ENCODE measurements at regions of chr10 and their contacts with region 1.

Region 1: DNA sequence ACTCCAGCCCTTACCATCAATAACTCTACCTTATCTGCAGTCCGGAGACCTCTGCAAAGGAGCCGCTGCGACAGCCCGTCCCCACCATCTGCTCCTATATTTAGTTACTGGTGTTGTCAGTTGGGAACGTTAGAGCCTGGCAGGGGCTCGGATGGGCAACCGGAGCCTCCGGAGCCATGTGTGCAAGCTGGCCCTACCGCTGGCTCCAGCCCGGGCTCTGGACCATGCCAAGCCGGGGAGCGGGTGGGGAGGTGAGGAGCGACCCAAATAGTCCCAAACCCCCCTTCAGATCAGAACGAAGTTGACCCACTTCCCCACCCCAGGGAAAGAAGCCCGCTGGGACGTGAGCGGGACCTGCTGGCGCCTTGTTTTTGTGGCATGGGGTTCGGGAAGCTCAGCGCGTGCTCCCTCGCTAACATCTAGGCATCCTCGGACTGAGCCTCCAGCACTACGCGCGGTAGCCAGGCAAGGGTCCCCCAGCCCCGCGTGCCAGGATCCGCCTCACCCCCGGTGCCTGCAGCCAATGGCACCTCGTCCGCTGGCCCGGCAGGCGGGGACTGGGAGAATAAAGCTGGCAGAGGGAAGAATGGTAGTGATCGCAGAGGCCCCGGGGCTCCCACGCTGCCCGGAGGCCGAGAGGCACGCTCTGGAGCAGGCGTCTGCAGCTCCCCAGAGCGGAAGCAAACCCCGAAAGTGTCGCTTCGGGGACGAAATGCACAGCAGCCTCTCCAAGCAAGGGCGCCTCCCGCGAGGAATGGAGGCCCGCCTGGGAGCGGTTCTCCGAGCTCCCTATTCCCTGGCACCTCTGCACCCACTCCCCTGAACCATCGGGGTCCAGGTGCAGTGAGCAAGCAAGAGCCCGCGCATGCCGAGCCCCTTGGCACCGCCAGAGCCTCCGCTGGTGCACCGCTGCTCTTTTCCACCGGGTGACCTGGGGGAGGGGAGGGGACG is 679 bp downstream of the LRRC20 start:
- DNase-seq: peak; percentile 57
- ATAC-seq: peak; percentile 21
- H3K4me3 ChIP-seq: peak overlapping the region; percentile 76
- H3K27ac ChIP-seq: no peak overlapping the region
- H3K4me1 ChIP-seq: peaks cover 28% of the 10 kb centered on the region
- H3K27me3 ChIP-seq: no peaks in the 10 kb centered on the region
- CTCF ChIP-seq: no peak

Region 2: DNA sequence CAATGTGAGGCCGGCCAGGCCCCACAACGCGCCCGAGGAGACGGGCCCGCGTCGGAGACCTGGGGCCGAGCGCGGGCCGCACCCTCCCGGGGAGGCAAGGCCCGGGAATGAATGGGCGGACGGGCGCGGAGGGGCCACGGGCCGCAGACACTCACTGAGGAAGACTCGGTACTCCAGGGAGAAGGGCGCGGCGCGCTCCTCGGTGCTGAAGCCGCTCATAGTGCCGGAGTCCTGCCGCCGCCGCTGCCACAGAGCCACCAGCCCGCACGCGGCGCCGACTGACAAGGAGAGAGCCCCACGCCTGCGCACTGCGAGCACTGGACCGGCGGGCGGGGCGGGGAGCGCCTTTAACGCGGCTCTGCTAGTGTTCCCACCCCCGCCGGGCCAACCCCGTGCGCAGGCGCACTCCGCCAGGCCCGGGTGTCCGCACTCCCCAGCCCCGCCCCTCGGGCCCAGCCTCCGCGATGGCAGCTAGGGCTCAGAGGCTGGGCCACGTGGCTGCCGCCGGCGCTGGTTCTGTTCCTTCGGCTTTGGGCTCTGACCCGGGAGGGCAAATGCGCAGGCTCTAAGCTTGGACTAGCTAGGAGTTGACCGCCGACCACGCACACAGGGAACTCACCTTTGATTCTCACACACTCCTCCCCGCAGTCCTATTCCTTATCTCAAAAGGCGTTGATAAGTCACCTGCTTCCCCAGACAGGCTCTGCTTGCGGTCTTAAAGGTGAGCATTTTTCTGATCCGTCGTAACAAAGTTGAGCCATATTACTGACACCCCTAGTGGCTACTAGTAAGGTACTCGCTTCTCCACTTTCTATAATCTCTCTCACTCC is 148.4 kb before region 1 on chr10 and contains the start of gene PPA1:
- CTCF ChIA-PET with region 1: no interaction called
- POLR2A ChIA-PET with region 1: no interaction called
- intact Hi-C with region 1: loop called (anchors 1 kb)
- DNase-seq: peak; percentile 100
- ATAC-seq: peak; percentile 87
- H3K4me3 ChIP-seq: peak within 1 kb of the TSS; percentile 91
- H3K27ac ChIP-seq: peak within 1 kb of the TSS; percentile 75
- H3K4me1 ChIP-seq: peaks cover 29% of the 10 kb centered on the region
- H3K27me3 ChIP-seq: no peaks in the 10 kb centered on the region
- CTCF ChIP-seq: peak; percentile 71
- total RNA-seq, gene PPA1: 392 and 440 TPM in 2 replicates

Region 3: DNA sequence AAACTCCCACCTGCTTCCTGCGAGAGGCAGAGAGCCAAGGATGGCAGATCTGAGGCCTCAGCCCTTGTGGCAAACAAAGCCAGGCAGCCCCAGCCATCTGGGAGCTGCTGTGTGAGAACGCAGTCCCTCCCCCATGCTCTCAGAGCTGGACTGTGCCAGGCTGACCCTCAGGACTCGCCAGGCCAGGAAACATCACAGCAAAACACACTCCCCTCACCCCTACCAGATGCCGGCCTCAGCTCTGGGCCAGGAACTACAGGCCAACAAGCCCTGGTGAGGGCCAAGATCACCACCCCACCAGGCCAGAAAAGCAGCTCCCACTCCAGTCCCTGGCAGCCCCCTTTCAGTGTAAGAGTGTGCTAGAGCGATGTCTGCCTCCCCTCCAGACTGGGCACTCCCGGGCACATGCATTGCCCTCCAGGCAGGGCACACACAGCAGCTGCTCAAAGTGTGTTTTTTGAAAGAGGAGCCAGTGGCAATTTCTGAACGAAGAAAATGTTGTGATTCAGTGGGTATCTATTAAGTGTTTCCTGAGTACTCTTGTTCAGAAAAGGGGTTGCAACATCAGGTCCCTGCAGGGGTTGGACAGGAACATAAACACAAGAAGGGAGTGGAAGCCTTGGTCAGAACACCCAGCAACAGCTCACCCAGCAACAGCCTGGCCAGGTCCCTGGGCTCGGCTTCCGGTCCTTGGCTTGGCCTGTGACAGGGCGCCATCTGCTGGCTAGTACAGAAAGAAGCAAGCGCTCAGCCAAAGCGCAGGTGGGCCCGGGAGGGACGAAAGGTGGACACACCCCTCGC is 17.6 kb before region 1 on chr10:
- CTCF ChIA-PET with region 1: interaction called, 14 read pairs
- POLR2A ChIA-PET with region 1: interaction called, 15 read pairs
- intact Hi-C with region 1: no loop called
- DNase-seq: peak; percentile 98
- ATAC-seq: peak; percentile 97
- H3K4me3 ChIP-seq: peak overlapping the region; percentile 36; the same call in 1 of the 2 replicates
- H3K27ac ChIP-seq: peak overlapping the region; percentile 14
- H3K4me1 ChIP-seq: peaks cover 14% of the 10 kb centered on the region
- H3K27me3 ChIP-seq: no peaks in the 10 kb centered on the region
- CTCF ChIP-seq: peak; percentile 100

Region 4: GRCh38 chr10:70461215-70461986 is 79.7 kb after region 1 on chr10:
- CTCF ChIA-PET with region 1: no interaction called
- POLR2A ChIA-PET with region 1: no interaction called
- intact Hi-C with region 1: loop called (anchors 1 kb)
- DNase-seq: peak; percentile 89
- ATAC-seq: peak; percentile 65
- H3K4me3 ChIP-seq: no peak overlapping the region
- H3K27ac ChIP-seq: no peak overlapping the region
- H3K4me1 ChIP-seq: peaks cover 27% of the 10 kb centered on the region
- H3K27me3 ChIP-seq: 0 out of 2 replicates have a peak, but pooled peaks cover 1% of the 10 kb centered on the region
- CTCF ChIP-seq: peak; percentile 99

Region 5: DNA sequence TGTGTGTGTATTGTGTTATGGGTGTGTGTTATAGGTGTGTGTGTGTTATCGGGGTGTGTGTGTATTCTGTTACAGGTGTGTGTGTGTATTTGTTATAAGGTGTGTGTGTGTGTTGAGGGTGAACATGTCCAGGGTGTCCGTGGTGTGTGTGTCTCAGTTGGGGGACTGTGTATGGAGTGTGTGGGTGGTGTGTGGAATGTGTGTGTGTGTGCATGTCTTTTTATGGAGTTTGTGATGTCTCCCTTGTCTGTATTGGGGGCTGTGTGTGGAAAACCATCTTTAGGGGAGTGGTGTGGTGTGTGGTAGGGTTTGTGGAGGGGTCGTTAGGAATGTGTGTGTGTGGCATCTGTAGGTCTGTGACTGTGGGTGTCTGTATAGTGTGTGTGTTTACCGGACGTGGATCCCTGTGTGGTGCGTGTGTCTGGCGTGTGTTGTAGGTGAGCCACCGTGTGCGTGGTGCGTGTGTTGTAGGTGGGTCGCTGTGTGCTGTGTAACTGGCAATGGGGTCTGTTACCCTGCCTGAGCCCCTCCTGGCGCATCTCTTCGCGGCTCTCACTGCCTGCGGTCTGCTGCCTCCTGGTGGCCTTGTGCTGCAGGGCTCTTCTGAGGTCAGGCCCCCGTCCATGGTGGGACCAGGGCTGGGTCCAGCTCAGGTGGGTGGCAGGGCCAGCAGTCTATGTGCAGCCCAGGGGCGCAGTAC is 158.5 kb after region 1 on chr10:
- CTCF ChIA-PET with region 1: interaction called, 6 read pairs
- POLR2A ChIA-PET with region 1: no interaction called
- intact Hi-C with region 1: loop called (anchors 2 kb)
- DNase-seq: peak; percentile 69
- ATAC-seq: peak; percentile 66
- H3K4me3 ChIP-seq: no peak overlapping the region
- H3K27ac ChIP-seq: no peak overlapping the region
- H3K4me1 ChIP-seq: peaks cover 7% of the 10 kb centered on the region; the same call in 1 of the 2 replicates
- H3K27me3 ChIP-seq: no peaks in the 10 kb centered on the region
- CTCF ChIP-seq: peak; percentile 100

Region 6: GRCh38 chr10:70918851-70919530 is 537.2 kb after region 1 on chr10:
- CTCF ChIA-PET with region 1: no interaction called
- POLR2A ChIA-PET with region 1: no interaction called
- intact Hi-C with region 1: no loop called
- DNase-seq: no peak
- ATAC-seq: no peak
- H3K4me3 ChIP-seq: no peak overlapping the region
- H3K27ac ChIP-seq: no peak overlapping the region
- H3K4me1 ChIP-seq: peaks cover 11% of the 10 kb centered on the region
- H3K27me3 ChIP-seq: peaks cover 8% of the 10 kb centered on the region
- CTCF ChIP-seq: no peak

Measured in PC-3 (cell line).